ENCODE measurements at regions of chr9 and their contacts with region 1.

Region 1: DNA sequence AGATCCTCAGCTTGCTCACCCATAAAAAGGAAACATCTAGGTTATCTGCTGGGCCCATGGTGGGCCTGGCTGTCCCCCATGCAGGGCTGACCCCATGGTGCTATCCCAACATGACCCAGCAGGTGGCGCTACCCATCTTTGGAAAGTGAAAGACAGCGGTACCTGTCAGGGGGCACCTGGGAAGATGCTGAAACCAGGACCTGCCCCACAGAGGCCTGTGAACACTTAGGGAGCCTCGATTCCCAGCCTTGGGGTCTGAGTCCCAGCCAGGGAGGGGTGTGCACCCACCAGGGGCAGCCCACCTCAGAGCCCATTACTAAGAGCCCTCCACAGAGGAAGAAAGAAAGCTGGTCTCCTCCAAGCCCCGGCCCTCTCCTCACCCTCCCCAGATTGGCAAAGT is 46.6 kb upstream of the IPPK start:
- DNase-seq: peak; percentile 36 to 86 (median 66)
- H3K4me3 ChIP-seq: no peak overlapping the region
- H3K27ac ChIP-seq: peak overlapping the region in 1 of 5 donors; percentile 55
- H3K4me1 ChIP-seq: no peaks in the 10 kb centered on the region
- H3K27me3 ChIP-seq: no peaks in the 10 kb centered on the region
- CTCF ChIP-seq: peak; percentile 82 to 94 (median 90)
- POLR2A ChIP-seq: no peak

Region 2: GRCh38 chr9:92764988-92765936 is 48.7 kb after region 1 on chr9:
- intact Hi-C with region 1: loop called (anchors 10 kb)
- DNase-seq: peak; percentile 98 to 99 (median 98)
- H3K4me3 ChIP-seq: peak overlapping the region; percentile 16 to 97 (median 38)
- H3K27ac ChIP-seq: peak overlapping the region; percentile 91 to 100 (median 99)
- H3K4me1 ChIP-seq: peaks cover 23 to 40% of the 10 kb centered on the region in 2 donors
- H3K27me3 ChIP-seq: no peaks in the 10 kb centered on the region
- CTCF ChIP-seq: peak; percentile 87 to 93 (median 88)
- POLR2A ChIP-seq: peak; percentile 94 to 96

Region 3: GRCh38 chr9:92790542-92791527 is 74.3 kb after region 1 on chr9:
- intact Hi-C with region 1: loop called (anchors 2 to 5 kb)
- DNase-seq: peak; percentile 75 to 95 (median 84)
- H3K4me3 ChIP-seq: no peak overlapping the region
- H3K27ac ChIP-seq: no peak overlapping the region
- H3K4me1 ChIP-seq: no peaks in the 10 kb centered on the region
- H3K27me3 ChIP-seq: no peaks in the 10 kb centered on the region
- CTCF ChIP-seq: peak; percentile 69 to 95 (median 92)
- POLR2A ChIP-seq: no peak

Region 4: GRCh38 chr9:92808726-92809451 is 92.3 kb after region 1 on chr9:
- intact Hi-C with region 1: no loop called
- DNase-seq: peak; percentile 53 to 76 (median 73)
- H3K4me3 ChIP-seq: peak overlapping the region in 1 of 4 donors; percentile 16
- H3K27ac ChIP-seq: no peak overlapping the region
- H3K4me1 ChIP-seq: peaks cover 17 to 26% of the 10 kb centered on the region in 2 donors
- H3K27me3 ChIP-seq: peaks cover 79% of the 10 kb centered on the region
- CTCF ChIP-seq: peak in 4 of 6 experiments; percentile 13 to 42 (median 26)
- POLR2A ChIP-seq: no peak

Measured in adrenal gland (tissue), 19 donors.